ENCODE measurements at regions of chr19 and their contacts with region 1.

Region 1: GRCh38 chr19:55160128-55160985 is 2.8 kb upstream of the TNNI3 start:
- DNase-seq: peak; percentile 32
- ATAC-seq: peak; percentile 99
- H3K4me3 ChIP-seq: no peak overlapping the region
- H3K27ac ChIP-seq: no peak overlapping the region
- H3K4me1 ChIP-seq: no peaks in the 10 kb centered on the region
- H3K27me3 ChIP-seq: no peaks in the 10 kb centered on the region; a peak in 2 of 4 replicates
- CTCF ChIP-seq: peak; percentile 90 to 98 (median 94)
- EP300 ChIP-seq: no peak
- POLR2A ChIP-seq: no peak
- RAD21 ChIP-seq: peak; percentile 81

Region 2: DNA sequence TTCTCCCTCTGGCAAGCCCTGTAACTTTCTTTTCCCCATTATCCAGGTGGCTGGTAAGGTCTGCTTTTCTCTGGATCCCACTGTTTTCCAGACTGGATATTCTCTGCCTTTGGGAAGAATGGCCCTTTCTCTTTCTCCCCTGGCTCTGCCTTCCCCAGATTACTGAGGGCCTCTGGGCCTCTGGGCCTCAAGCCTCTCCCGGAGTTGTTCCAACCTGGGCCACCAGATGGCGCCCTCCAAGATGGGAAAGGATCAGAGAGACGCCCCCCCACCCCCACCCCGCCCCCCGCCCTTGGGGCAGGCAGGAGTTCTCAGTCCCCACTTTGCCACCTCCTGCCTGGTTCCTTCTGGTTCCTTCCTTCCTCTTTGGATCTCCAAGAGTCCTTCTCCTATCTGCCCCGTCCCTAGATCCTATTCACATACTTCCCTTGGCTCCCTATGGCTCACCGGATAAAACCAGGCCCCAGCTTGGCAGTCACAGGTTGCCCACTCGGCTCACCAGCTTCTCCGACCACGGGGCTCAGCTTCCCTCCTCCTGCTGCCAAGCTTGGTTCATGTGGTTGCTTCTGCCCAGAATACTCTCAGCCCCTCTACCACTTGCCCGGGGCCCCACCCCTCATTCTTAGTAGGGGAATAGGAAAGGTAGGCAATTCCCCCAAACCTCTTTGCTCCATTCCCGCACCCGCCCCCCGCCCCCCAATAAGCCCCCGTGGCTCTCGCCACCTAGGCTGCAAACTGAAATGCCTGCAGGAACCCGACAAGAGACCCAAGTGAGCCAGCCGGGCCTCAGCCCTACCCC is 71.6 kb before region 1 on chr19:
- CTCF ChIA-PET with region 1: interaction called, 18 read pairs
- POLR2A ChIA-PET with region 1: no interaction called
- RAD21 ChIA-PET with region 1: interaction called, 14 read pairs
- SMC1A ChIA-PET with region 1: no interaction called
- in situ Hi-C with region 1: no loop called
- intact Hi-C with region 1: no loop called
- DNase-seq: no peak
- ATAC-seq: peak; percentile 81
- H3K4me3 ChIP-seq: no peak overlapping the region
- H3K27ac ChIP-seq: no peak overlapping the region
- H3K4me1 ChIP-seq: 0 out of 2 replicates have a peak, but pooled peaks cover 3% of the 10 kb centered on the region
- H3K27me3 ChIP-seq: peaks cover 0 to 7% of the 10 kb centered on the region in 2 experiments; a peak in 2 of 4 replicates
- CTCF ChIP-seq: peak; percentile 48 to 76 (median 54)
- EP300 ChIP-seq: no peak
- POLR2A ChIP-seq: no peak
- RAD21 ChIP-seq: peak; percentile 50

Region 3: DNA sequence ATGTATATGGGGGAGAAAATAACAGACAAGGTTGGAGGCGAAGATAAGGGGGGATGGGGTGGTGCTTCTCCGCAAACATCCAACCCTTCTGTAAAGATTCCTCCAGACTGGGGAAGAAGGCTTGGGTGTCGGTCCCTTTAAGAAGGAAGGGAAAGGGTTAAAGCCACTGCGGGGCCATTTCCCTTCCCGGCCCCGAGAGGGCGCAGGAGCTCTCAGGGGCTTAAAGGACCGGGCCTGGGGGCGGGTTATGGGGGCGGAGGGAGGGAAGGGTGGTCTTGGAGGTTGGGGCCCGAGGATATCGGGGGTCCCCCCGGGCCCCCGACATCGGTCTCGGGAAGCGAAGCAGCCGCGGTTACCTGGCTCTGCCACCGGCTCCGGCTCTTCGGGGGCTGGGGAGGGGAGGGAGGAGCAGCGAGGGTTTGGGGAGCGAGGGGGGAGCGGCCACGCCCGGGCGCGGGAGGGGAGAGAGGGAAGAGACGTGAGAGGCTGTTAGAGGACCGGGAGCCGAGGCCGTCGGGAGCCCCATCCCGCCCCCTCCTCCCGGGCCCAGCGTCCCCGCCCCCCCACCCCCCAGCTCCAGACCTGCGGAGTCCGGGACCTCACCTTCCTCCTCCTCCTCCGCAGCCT is 14.2 kb before region 1 on chr19:
- CTCF ChIA-PET with region 1: interaction called, 23 read pairs
- POLR2A ChIA-PET with region 1: no interaction called
- RAD21 ChIA-PET with region 1: interaction called, 7 read pairs
- SMC1A ChIA-PET with region 1: interaction called, 3 read pairs
- in situ Hi-C with region 1: no loop called
- intact Hi-C with region 1: no loop called
- DNase-seq: no peak
- ATAC-seq: peak; percentile 68
- H3K4me3 ChIP-seq: no peak overlapping the region
- H3K27ac ChIP-seq: no peak overlapping the region
- H3K4me1 ChIP-seq: no peaks in the 10 kb centered on the region
- H3K27me3 ChIP-seq: no peaks in the 10 kb centered on the region; a peak in 2 of 4 replicates
- CTCF ChIP-seq: peak; percentile 37 to 70 (median 45)
- EP300 ChIP-seq: no peak
- POLR2A ChIP-seq: no peak
- RAD21 ChIP-seq: peak; percentile 38; the same call in 1 of the 2 replicates

Measured in GM12878 (cell line).